Activated CD4-positive, alpha-beta T cell treated with anti-CD3 and anti-CD28 coated beads for 36 hours (primary cell): ENCODE measurements at regions of chr7 and their contacts with region 1.

Region 1: DNA sequence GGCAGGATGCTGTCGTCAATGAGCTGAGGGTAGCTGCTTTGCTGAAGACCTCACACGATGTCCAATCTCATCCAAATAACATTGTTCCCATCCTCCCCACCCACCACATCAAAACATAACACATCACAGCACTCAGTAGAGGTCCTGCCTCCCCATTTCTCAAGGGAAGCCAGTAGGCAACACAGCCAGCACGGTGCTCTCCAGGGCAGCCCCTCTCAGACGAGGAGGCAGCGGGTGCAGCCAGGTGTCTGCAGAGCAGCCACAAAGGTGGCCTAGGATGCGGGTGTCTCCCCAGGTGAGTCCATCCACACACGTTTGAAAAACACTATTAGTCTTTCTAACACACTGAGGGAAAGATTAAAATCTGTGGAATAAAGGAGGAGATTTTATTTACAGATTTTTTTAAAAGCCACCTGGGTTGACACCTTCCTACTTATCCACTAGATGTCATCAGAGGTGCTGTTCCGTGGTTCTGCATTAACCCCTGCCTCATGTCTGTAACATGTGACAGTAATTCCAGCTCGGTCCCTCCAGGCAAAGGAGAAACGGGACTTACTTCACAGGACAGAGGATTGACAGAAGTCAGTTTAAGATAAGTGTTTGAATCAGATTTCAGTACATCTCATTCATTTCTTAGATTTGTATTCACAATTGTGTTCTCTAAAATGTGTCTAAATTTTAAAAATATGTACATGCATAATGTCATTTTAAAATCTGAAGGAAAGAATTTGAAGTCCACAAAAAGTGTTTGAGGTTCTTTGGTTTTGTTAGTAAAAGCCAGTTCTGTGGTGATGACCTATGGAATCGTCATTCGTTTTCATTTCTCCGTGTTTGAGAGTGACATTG is 68.0 kb downstream of the LANCL2 start:
- DNase-seq: peak; percentile 45
- ATAC-seq: peak; percentile 79
- H3K4me3 Mint-ChIP-seq: no peak overlapping the region
- H3K27ac Mint-ChIP-seq: peak overlapping the region; percentile 43
- H3K4me1 Mint-ChIP-seq: peaks cover 33% of the 10 kb centered on the region
- H3K27me3 Mint-ChIP-seq: no peaks in the 10 kb centered on the region

Region 2: DNA sequence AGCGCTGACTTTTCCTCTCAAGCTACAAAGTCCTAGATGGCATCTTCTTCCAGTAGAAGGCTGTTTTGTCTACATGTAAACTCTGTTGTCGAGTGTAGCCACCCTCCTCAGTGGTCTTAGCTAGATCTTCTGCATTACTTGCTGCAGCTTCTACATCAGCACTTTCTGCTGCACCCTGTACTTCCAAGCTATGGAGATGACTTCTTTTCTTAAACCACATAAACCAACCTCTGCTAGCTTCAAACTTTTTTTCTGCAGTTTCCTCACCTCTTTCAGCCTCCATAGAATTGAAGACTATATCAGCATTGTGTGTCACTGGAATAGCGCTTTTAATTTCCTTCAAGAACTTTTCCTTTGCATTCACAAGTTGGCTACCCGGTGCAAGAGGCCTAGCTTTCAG is 19.8 kb after region 1 on chr7:
- CTCF ChIA-PET with region 1: no interaction called
- POLR2A ChIA-PET with region 1: no interaction called
- intact Hi-C with region 1: no loop called
- DNase-seq: no peak
- ATAC-seq: no peak
- H3K4me3 Mint-ChIP-seq: no peak overlapping the region
- H3K27ac Mint-ChIP-seq: peak overlapping the region; percentile 12
- H3K4me1 Mint-ChIP-seq: peaks cover 31% of the 10 kb centered on the region
- H3K27me3 Mint-ChIP-seq: no peaks in the 10 kb centered on the region

Region 3: GRCh38 chr7:55515569-55516279 is 82.6 kb after region 1 on chr7:
- CTCF ChIA-PET with region 1: no interaction called
- POLR2A ChIA-PET with region 1: no interaction called
- intact Hi-C with region 1: loop called (anchors 2 to 5 kb)
- DNase-seq: peak; percentile 50
- ATAC-seq: peak; percentile 25
- H3K4me3 Mint-ChIP-seq: peak overlapping the region; percentile 2
- H3K27ac Mint-ChIP-seq: peak overlapping the region; percentile 69
- H3K4me1 Mint-ChIP-seq: peaks cover 66% of the 10 kb centered on the region
- H3K27me3 Mint-ChIP-seq: no peaks in the 10 kb centered on the region

Region 4: DNA sequence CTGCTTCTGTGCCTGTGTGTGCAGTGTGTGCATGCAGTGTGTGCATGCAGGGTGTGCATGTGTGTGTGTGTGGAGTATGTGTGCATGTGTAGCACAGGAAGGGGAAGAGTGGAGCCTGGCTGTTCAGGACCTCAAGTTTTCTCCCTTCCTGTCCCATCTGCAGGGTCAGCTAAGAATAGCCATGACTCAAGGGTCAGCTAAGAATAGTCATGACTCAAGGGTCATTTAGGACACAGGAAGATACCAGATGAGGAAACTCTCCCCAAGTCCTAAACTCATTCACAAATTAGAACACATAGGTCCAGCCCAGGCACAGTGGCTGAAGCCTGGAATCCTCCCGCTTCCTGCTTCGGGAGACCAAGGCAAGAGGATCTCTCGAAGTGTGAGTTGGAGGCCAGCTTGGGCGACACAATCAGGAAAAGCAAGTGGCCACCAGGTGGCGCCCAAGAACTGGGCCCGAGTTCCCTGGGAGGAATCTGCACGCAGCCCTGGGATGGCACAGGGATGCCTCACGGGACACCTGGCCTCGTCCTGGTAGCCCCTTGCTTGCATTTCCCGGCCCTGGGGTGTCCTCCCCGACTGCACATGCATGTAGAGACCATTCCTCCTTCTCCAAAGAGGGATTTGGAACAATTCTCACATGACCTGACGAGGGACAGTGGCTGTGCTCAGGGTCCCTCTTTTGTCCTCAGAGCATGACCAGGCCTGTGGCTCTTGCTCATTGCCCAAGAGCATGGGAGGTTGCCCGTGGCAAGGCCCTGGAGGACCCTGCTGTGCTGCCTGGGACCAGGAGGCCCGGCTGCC is 160.6 kb after region 1 on chr7:
- CTCF ChIA-PET with region 1: interaction called, 20 read pairs
- POLR2A ChIA-PET with region 1: no interaction called
- intact Hi-C with region 1: loop called (anchors 1 kb)
- DNase-seq: peak; percentile 87
- ATAC-seq: peak; percentile 77
- H3K4me3 Mint-ChIP-seq: no peak overlapping the region
- H3K27ac Mint-ChIP-seq: no peak overlapping the region
- H3K4me1 Mint-ChIP-seq: peaks cover 11% of the 10 kb centered on the region
- H3K27me3 Mint-ChIP-seq: no peaks in the 10 kb centered on the region

Region 5: DNA sequence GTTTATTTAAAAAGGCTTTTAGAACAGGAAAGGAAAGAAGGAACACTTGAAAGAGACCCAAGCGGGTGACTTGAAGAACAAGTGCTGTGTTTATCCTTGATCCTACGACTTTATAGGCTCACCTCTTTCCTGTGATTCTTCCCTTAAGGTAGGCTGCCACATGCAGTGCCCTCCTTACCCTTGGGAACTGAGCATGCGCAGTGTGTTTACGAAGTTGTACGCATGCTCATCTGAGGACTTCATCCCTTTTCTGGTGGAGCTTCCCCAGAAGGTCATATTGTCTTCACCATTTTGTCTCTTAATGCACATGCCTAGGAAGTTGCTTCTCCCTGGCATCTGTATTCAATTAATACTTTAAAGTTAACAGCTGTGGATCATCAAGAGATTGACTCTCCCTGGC is 189.1 kb after region 1 on chr7:
- CTCF ChIA-PET with region 1: no interaction called
- POLR2A ChIA-PET with region 1: no interaction called
- intact Hi-C with region 1: no loop called
- DNase-seq: no peak
- ATAC-seq: no peak
- H3K4me3 Mint-ChIP-seq: no peak overlapping the region
- H3K27ac Mint-ChIP-seq: no peak overlapping the region
- H3K4me1 Mint-ChIP-seq: no peaks in the 10 kb centered on the region
- H3K27me3 Mint-ChIP-seq: peaks cover 11% of the 10 kb centered on the region